ENCODE measurements at regions of chr16 and their contacts with region 1.

Region 1: DNA sequence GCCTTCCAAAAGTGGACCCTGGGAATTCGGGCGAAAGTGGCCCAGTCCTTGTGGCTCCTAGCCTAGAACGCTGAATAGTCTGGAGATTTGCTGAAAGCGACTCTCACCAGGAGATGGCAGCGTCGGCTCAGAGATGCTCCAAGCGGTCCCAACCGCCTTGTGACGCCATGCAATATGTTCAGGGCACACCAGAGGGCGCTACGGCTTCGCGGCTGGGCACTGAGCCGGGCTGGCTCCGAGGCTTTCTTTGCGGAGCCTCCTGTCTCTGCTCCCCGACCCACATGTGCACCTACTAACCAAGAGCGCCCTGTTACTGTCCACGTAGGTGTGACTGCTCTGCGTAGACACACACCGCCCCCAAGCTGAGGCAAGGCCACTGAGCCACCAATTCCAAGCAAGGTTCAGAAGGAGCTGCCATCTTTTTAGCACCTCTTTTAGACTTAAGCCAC is 36.9 kb downstream of the SYCE1L start:
- H3K4me3 ChIP-seq: no peak overlapping the region
- H3K27ac ChIP-seq: no peak overlapping the region
- H3K4me1 ChIP-seq: peaks cover 18% of the 10 kb centered on the region
- CTCF ChIP-seq: peak; percentile 100

Region 2: DNA sequence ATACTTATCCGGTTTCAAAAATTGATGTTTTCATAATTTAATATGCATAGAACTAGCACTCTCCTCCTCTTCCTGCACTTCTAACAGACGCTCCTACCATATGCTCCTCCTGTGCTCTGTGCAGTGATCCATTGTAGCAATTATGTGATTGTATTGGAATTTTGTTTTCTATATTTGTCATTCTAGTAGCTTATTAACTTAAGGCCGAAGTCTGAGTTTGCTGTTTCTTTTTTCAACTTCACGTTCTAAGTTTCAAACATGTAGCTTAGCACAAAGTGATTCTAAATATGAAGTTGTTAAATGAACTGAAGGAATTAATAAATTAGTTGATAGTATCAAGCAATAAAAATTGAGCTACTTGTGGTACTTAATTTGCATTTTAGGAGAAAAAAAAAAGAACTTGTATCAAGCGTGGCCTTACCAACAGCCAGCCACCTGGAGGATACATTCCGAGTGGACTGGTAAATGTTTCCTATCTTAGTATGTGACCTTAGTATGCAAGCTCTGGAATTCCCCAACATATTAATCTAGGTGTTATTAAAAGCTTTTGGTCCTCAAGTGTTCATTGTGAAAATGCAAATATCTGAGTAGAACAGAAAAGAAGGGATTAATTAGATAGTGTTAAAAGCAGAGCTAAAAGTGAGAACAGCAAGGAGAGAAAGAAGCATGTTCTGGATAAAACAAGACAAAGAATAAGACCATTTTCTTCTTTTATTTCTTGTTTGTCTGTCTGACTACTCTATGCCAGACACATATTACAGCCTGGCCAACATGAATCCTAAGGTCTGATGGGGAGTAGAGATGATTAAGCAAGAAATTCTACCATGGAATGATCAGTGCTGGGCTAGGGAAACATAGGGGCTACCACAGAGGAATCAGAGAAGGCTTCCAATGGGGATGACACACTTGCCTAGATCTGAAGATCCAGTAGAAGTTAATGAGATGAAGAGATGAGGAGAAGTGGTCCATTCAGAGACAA is 335.5 kb before region 1 on chr16:
- CTCF ChIA-PET with region 1: no interaction called
- POLR2A ChIA-PET with region 1: no interaction called
- H3K4me3 ChIP-seq: no peak overlapping the region
- H3K27ac ChIP-seq: no peak overlapping the region
- H3K4me1 ChIP-seq: no peaks in the 10 kb centered on the region
- CTCF ChIP-seq: no peak

Region 3: GRCh38 chr16:77437859-77438258 is 201.8 kb after region 1 on chr16:
- CTCF ChIA-PET with region 1: interaction called, 10 read pairs
- POLR2A ChIA-PET with region 1: no interaction called
- H3K4me3 ChIP-seq: no peak overlapping the region
- H3K27ac ChIP-seq: no peak overlapping the region
- H3K4me1 ChIP-seq: peaks cover 9% of the 10 kb centered on the region; the same call in 1 of the 2 replicates
- CTCF ChIP-seq: peak; percentile 71

Region 4: GRCh38 chr16:77569406-77569805 is 333.3 kb after region 1 on chr16:
- CTCF ChIA-PET with region 1: interaction called, 20 read pairs
- POLR2A ChIA-PET with region 1: no interaction called
- H3K4me3 ChIP-seq: no peak overlapping the region
- H3K27ac ChIP-seq: no peak overlapping the region
- H3K4me1 ChIP-seq: no peaks in the 10 kb centered on the region; the same call in 1 of the 2 replicates
- CTCF ChIP-seq: no peak

Region 5: GRCh38 chr16:77660311-77660710 is 424.2 kb after region 1 on chr16:
- CTCF ChIA-PET with region 1: interaction called, 23 read pairs
- POLR2A ChIA-PET with region 1: no interaction called
- H3K4me3 ChIP-seq: no peak overlapping the region
- H3K27ac ChIP-seq: no peak overlapping the region; the same call in 1 of the 2 replicates
- H3K4me1 ChIP-seq: 0 out of 2 replicates have a peak, but pooled peaks cover 2% of the 10 kb centered on the region
- CTCF ChIP-seq: peak; percentile 45; the same call in 1 of the 2 replicates

Measured in HEK293 (cell line).